Ascending aorta (tissue), 2 donors: ENCODE measurements at regions of chr3 and their contacts with region 1.

Region 1: DNA sequence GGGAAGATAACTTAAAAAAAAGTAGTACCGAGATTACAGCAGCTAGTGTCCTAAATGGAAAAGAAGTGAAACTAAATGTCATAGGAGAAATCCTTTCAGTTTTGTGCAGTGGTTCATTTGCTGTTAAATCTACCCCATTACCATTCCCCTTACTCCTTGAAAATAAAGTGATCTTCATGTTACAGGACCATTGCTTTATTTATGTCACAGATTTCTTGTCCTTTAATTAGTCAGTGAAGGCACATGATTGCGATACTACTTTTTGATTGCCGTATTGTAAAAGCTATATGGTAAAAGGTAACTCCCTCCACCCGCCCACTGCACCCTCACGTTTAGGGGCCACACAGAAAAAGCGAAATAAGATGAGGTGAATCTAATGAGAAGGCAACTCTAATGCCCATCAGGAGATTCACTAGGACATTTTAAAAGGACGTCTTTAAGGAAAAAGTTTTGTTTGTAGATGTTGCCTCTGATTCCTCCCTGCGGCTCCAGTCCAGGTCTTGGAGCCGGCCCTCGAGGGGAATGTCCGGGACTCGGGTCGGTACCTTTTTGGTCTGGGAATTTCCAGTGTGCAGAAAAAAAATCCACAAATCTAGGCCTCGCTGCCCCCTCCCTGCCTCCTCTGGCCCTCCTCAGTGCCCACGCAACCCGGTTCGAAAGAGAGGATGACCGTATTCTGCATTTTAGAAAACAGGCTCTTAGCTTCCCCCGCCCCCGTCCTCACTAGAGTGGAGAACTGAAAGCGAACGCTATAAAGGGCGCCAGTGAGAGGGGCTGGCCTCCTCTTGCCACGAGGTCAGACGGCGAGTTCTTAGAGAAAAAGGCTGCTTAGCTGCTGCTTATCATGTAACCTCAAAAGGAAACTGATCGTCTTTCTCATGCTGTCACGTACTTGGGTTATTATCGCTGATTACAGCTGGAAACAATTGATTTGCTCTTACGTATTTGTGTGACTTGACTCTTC is 21.8 kb upstream of the NFKBIZ start:
- DNase-seq: peak; percentile 53 to 90
- H3K4me3 ChIP-seq: peak overlapping the region; percentile 64 to 66
- H3K27ac ChIP-seq: peak overlapping the region; percentile 78 to 87
- H3K4me1 ChIP-seq: peaks cover 0 to 21% of the 10 kb centered on the region in 2 donors
- H3K27me3 ChIP-seq: no peaks in the 10 kb centered on the region
- CTCF ChIP-seq: no peak

Region 2: DNA sequence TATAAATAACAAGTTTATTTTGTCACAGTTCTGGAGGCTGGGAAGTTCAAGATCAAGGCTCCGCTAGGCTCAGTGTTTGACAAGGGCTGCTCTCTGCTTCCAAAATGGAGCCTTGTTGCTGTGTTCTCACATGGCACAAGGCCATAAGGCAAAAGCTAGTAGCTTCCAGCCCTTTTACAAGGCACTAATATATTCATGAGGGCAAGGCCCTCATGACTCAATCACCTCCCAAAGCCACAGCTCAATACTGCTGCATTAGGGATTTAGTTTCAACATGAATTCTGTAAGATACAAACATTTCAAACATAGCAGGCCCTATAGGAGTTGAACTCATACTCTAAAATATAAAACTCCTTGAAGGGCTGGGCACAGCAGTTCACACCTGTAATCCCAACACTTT is 180.8 kb before region 1 on chr3:
- intact Hi-C with region 1: no loop called
- DNase-seq: no peak
- H3K4me3 ChIP-seq: no peak overlapping the region
- H3K27ac ChIP-seq: no peak overlapping the region
- H3K4me1 ChIP-seq: no peaks in the 10 kb centered on the region
- H3K27me3 ChIP-seq: no peaks in the 10 kb centered on the region
- CTCF ChIP-seq: no peak

Region 3: GRCh38 chr3:101849051-101849720 is 21.7 kb after region 1 on chr3 and contains the start of gene NFKBIZ:
- intact Hi-C with region 1: loop called (anchors 1 kb)
- DNase-seq: peak; percentile 87 to 98
- H3K4me3 ChIP-seq: peak within 1 kb of the TSS; percentile 90 to 93
- H3K27ac ChIP-seq: peak within 1 kb of the TSS; percentile 98 to 99
- H3K4me1 ChIP-seq: peaks cover 0 to 26% of the 10 kb centered on the region in 2 donors
- H3K27me3 ChIP-seq: no peaks in the 10 kb centered on the region
- CTCF ChIP-seq: peak in 1 of 3 experiments; percentile 20
- total RNA-seq, gene NFKBIZ: 349 TPM

Region 4: DNA sequence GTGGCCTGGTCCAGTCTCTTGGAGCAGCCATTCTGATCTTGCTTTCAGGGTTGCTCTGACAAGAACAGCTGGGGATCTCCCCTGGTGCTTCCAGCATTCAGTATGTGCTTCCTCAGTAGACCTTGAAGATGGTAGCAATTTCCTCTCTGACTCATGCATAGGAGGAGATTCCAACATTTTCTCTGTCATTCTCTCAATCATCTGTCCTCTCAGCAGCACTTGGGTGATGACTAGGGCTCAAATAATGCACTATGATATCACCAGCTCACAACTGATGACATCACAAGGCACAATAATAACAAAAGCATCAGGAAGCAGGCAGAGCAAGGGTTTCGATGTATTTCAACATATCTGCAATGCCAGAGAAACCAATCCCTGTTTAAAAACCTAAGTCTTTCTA is 74.5 kb after region 1 on chr3:
- intact Hi-C with region 1: loop called (anchors 2 kb)
- DNase-seq: no peak
- H3K4me3 ChIP-seq: no peak overlapping the region
- H3K27ac ChIP-seq: no peak overlapping the region
- H3K4me1 ChIP-seq: no peaks in the 10 kb centered on the region
- H3K27me3 ChIP-seq: no peaks in the 10 kb centered on the region
- CTCF ChIP-seq: no peak